B cell (primary cell): ENCODE measurements at regions of chr17 and their contacts with region 1.

Region 1: GRCh38 chr17:27879987-27880608 is 13.1 kb downstream of the LYRM9 start:
- DNase-seq: peak; percentile 71
- ATAC-seq: peak; percentile 74
- H3K4me3 ChIP-seq: no peak overlapping the region
- H3K4me3 Mint-ChIP-seq: no peak overlapping the region
- H3K27ac ChIP-seq: no peak overlapping the region
- H3K27ac Mint-ChIP-seq: no peak overlapping the region
- H3K4me1 ChIP-seq: no peaks in the 10 kb centered on the region
- H3K4me1 Mint-ChIP-seq: no peaks in the 10 kb centered on the region
- H3K27me3 ChIP-seq: no peaks in the 10 kb centered on the region
- H3K27me3 Mint-ChIP-seq: no peaks in the 10 kb centered on the region
- CTCF ChIP-seq: peak; percentile 77

Region 2: GRCh38 chr17:27892866-27893769 is 13.0 kb after region 1 on chr17 and contains the start of gene LYRM9:
- CTCF ChIA-PET with region 1: interaction called, 60 read pairs
- POLR2A ChIA-PET with region 1: no interaction called
- intact Hi-C with region 1: no loop called
- DNase-seq: peak; percentile 93
- ATAC-seq: peak; percentile 98
- H3K4me3 ChIP-seq: peak within 1 kb of the TSS; percentile 58 to 82 (median 71)
- H3K4me3 Mint-ChIP-seq: peak within 1 kb of the TSS; percentile 80
- H3K27ac ChIP-seq: peak within 1 kb of the TSS; percentile 12 to 57
- H3K27ac Mint-ChIP-seq: peak within 1 kb of the TSS; percentile 77
- H3K4me1 ChIP-seq: peaks cover 16 to 23% of the 10 kb centered on the region in 2 donors
- H3K4me1 Mint-ChIP-seq: peaks cover 23% of the 10 kb centered on the region
- H3K27me3 ChIP-seq: no peaks in the 10 kb centered on the region
- H3K27me3 Mint-ChIP-seq: peaks cover 4% of the 10 kb centered on the region
- CTCF ChIP-seq: peak; percentile 91
- total RNA-seq, gene LYRM9: 12.1 and 14.0 TPM in 2 replicates